Heart left ventricle (tissue), 16 donors: ENCODE measurements at regions of chr4 and their contacts with region 1.

Region 1: DNA sequence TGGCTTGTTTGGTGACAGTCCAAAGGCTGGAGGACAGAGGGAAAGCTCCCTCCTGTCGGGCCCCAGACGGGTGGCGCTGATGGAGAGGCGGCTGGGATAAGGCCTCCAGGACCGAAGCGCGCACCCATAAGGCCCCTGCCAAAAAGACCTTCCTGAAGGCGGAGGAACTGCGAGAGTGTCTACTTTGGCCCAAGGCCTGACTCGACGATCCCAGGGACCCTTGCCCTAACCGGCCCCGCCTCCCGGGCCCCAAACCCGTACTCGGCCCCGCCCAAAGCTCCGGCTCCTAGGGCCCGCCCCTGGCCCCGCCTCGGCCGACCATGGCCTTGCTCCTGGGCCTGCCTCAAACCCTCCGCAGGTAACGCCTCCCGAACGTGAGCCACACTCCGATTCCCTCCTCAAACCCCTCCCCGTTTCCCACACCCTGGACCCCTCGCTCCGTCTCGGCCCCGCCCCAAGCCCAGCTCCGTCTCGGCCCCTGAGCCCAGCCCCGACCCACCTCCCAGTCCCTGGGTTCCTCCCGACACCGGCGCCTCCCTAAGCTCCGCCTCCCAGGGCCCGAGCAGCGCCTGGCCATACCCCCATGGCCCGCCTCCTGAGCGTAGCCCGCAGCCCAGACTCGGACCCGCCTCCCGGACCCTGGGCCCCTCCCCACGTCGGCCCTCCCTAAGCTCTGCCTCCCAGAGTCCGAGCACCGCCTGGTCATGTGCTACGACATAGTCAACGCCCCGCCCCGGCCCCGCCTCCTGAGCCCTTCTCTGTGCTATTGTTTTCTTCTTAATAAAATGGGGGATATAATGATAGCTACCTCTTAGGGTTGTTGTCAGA is 90.0 kb upstream of the DRD5 start:
- DNase-seq: peak; percentile 96 to 98 (median 97)
- ATAC-seq: peak; percentile 100
- H3K4me3 ChIP-seq: peak overlapping the region; percentile 30 to 74 (median 65)
- H3K27ac ChIP-seq: peak overlapping the region; percentile 53 to 85 (median 72)
- H3K4me1 ChIP-seq: peaks cover 0 to 7% (median 2%) of the 10 kb centered on the region in 12 donors
- H3K27me3 ChIP-seq: no peaks in the 10 kb centered on the region
- CTCF ChIP-seq: no peak
- POLR2A ChIP-seq: no peak

Region 2: GRCh38 chr4:9835430-9835829 is 144.0 kb after region 1 on chr4:
- intact Hi-C with region 1: no loop called
- DNase-seq: no peak
- ATAC-seq: no peak
- H3K4me3 ChIP-seq: no peak overlapping the region
- H3K27ac ChIP-seq: no peak overlapping the region
- H3K4me1 ChIP-seq: no peaks in the 10 kb centered on the region
- H3K27me3 ChIP-seq: no peaks in the 10 kb centered on the region
- CTCF ChIP-seq: no peak
- POLR2A ChIP-seq: no peak

Region 3: GRCh38 chr4:10116580-10117358 is 425.3 kb after region 1 on chr4 and contains the start of gene WDR1:
- intact Hi-C with region 1: loop called in 1 of 10 experiments (anchors 5 kb)
- DNase-seq: peak; percentile 97 to 99 (median 98)
- ATAC-seq: peak; percentile 95 to 98 (median 96)
- H3K4me3 ChIP-seq: peak within 1 kb of the TSS; percentile 63 to 89 (median 78)
- H3K27ac ChIP-seq: peak within 1 kb of the TSS; percentile 85 to 99 (median 96)
- H3K4me1 ChIP-seq: peaks cover 0 to 54% (median 39%) of the 10 kb centered on the region in 12 donors
- H3K27me3 ChIP-seq: no peaks in the 10 kb centered on the region
- CTCF ChIP-seq: no peak
- POLR2A ChIP-seq: peak; percentile 92 to 99
- total RNA-seq, gene WDR1: 113 to 299 (median 185) TPM